MCF 10A (cell line): ENCODE measurements at regions of chr2 and their contacts with region 1.

Region 1: GRCh38 chr2:107669335-107669734 is 157.4 kb upstream of the RGPD4 start:
- DNase-seq: peak; percentile 37
- H3K4me3 Mint-ChIP-seq: no peak overlapping the region
- H3K27ac Mint-ChIP-seq: no peak overlapping the region
- H3K4me1 Mint-ChIP-seq: no peaks in the 10 kb centered on the region
- H3K27me3 Mint-ChIP-seq: no peaks in the 10 kb centered on the region
- CTCF ChIP-seq: peak; percentile 53

Region 2: DNA sequence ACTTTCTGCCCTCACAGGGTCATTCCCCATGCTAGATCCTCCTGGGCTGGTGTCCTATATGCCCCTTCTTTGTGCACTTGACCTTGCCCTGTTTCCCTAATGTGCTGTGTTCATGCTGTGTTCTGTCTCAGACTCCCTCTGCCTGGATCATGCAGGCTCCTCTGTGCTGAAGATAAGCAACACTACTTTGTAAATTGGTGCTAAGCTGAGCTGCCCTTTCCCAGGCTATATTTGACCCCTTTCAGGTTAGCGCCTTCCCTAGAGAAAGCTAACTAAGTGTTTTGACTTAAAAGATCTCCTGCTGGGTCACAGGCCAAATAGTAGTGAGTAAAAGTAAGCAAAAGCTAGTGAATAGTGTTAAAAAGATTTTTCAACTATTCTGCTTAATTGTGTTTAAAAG is 99.8 kb before region 1 on chr2:
- CTCF ChIA-PET with region 1: interaction called, 3 read pairs
- POLR2A ChIA-PET with region 1: no interaction called
- intact Hi-C with region 1: loop called (anchors 1 kb)
- DNase-seq: no peak
- H3K4me3 Mint-ChIP-seq: no peak overlapping the region
- H3K27ac Mint-ChIP-seq: no peak overlapping the region
- H3K4me1 Mint-ChIP-seq: no peaks in the 10 kb centered on the region
- H3K27me3 Mint-ChIP-seq: no peaks in the 10 kb centered on the region
- CTCF ChIP-seq: no peak

Region 3: GRCh38 chr2:107648781-107649404 is 20.4 kb before region 1 on chr2:
- CTCF ChIA-PET with region 1: no interaction called
- POLR2A ChIA-PET with region 1: no interaction called
- intact Hi-C with region 1: no loop called
- DNase-seq: no peak
- H3K4me3 Mint-ChIP-seq: no peak overlapping the region
- H3K27ac Mint-ChIP-seq: no peak overlapping the region
- H3K4me1 Mint-ChIP-seq: no peaks in the 10 kb centered on the region
- H3K27me3 Mint-ChIP-seq: no peaks in the 10 kb centered on the region
- CTCF ChIP-seq: no peak